HCT116 (cell line): ENCODE measurements at regions of chr2 and their contacts with region 1.

Region 1: DNA sequence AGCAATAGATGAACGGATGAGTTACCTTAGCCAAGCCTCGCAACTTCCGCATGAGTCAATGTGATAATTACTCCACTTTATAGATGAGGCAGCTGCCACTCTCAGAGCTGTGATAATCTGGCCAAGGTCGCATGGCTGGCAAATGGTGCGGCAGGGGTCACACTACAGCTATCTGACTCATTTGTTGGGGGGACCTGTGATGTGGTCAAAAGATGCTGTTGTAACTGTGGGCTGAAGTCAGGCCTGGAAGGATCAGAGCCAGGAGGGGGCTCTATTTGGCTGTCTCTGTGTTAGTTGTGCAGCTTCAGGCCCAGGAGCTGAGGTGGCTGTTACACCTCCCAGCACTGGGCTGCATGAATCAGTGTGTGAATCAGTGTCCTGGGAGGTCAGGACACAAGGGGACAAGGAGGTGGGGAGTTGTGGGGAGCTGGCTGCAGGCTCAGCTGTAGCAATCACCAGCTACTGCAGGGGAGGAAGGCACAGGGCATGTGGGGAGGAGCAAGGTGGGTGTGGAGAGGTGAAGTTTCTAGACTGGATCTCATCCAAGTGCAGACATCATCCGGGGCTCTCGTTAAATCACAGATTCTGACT is 33.1 kb downstream of the NGEF start:
- DNase-seq: peak; percentile 90
- ATAC-seq: peak; percentile 88
- H3K4me3 ChIP-seq: peak overlapping the region in 1 of 2 experiments; percentile 26; a peak in 1 of 4 replicates
- H3K27ac ChIP-seq: peak overlapping the region; percentile 50
- H3K4me1 ChIP-seq: peaks cover 36 to 49% of the 10 kb centered on the region in 2 experiments
- H3K27me3 ChIP-seq: no peaks in the 10 kb centered on the region; the same call in 1 of the 2 replicates
- CTCF ChIP-seq: peak in 2 of 3 experiments; percentile 31 to 40; a peak in 2 of 6 replicates
- POLR2A ChIP-seq: no peak
- RAD21 ChIP-seq: no peak

Region 2: DNA sequence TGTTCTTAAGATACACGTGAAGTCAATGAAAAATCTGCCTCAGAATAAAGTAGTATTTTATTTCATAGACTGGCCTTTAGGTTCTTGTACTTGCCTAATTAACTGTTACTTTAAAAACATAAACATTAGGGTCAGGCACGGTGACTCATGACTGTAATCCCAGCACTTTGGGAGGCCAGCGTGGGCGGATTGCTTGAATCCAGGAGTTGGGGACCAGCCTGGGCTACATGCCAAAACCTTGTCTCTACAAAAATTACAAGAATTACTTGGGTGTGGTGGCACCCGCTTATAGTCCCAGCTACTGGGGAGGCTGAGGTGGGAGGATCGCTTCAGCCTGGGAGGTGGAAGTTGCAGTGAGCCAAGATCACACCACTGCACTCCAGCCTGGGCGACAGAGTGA is 125.9 kb before region 1 on chr2:
- CTCF ChIA-PET with region 1: interaction called, 4 read pairs
- POLR2A ChIA-PET with region 1: no interaction called
- RAD21 ChIA-PET with region 1: interaction called, 3 to 6 read pairs
- intact Hi-C with region 1: loop called (anchors 5 kb)
- DNase-seq: peak; percentile 78
- ATAC-seq: peak; percentile 58
- H3K4me3 ChIP-seq: peak overlapping the region in 1 of 2 experiments; percentile 41; a peak in 2 of 4 replicates
- H3K27ac ChIP-seq: peak overlapping the region; percentile 72; the same call in 1 of the 2 replicates
- H3K4me1 ChIP-seq: peaks cover 54 to 64% of the 10 kb centered on the region in 2 experiments
- H3K27me3 ChIP-seq: no peaks in the 10 kb centered on the region
- CTCF ChIP-seq: no peak
- POLR2A ChIP-seq: no peak
- RAD21 ChIP-seq: peak; percentile 28; the same call in 1 of the 2 replicates

Region 3: DNA sequence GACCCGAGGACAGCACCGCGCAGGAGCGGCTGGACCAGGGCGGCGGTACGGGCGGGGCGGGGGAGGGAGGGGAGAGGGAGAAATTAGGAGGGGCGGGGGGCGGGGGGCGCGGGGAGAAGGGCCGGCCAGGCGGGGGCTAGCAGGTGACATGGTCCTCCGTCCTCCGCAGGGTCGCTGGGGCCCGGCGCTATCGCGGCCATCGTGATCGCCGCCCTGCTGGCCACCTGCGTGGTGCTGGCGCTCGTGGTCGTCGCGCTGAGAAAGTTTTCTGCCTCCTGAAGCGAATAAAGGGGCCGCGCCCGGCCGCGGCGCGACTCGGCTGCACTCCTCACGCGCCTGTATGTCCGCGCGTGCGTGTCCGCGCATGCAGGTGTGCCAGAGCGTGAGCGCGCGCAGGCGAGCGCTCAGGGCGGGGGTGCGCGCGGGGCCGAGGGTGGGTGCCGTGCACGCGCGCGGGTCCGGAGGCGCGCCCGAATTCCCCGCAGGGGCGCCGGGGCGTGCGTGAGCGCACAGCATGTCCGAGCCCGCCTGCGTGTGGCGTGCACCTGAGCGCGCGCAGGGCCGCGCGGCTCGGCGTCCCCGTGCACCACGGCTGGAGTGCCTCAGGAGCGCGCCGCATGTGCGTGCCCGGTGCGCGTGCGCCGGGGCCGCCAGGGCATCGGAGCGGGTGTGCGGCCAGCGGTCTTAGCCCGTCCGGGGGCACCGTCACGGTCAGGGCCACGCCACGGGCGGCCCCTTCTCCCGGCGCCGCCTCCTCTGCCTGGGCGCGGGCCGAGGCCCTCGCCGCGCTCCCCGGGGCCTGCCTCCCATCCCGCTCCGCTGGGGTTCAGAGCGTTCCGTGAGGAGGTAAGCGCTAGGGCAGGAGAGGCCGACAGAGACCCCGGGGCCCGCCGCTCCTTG is 103.6 kb before region 1 on chr2:
- CTCF ChIA-PET with region 1: no interaction called
- POLR2A ChIA-PET with region 1: no interaction called
- RAD21 ChIA-PET with region 1: no interaction called
- intact Hi-C with region 1: no loop called
- DNase-seq: no peak
- ATAC-seq: no peak
- H3K4me3 ChIP-seq: no peak overlapping the region
- H3K27ac ChIP-seq: no peak overlapping the region
- H3K4me1 ChIP-seq: no peaks in the 10 kb centered on the region
- H3K27me3 ChIP-seq: no peaks in the 10 kb centered on the region
- CTCF ChIP-seq: 0 out of 6 replicates have a peak, but pooled peaks of 1 of the 3 experiments have one; percentile 4
- POLR2A ChIP-seq: no peak
- RAD21 ChIP-seq: no peak

Region 4: GRCh38 chr2:232890896-232891601 is 88.9 kb before region 1 on chr2:
- CTCF ChIA-PET with region 1: no interaction called
- POLR2A ChIA-PET with region 1: no interaction called
- RAD21 ChIA-PET with region 1: no interaction called
- intact Hi-C with region 1: loop called (anchors 5 kb)
- DNase-seq: peak; percentile 77
- ATAC-seq: peak; percentile 89
- H3K4me3 ChIP-seq: peak overlapping the region; percentile 64
- H3K27ac ChIP-seq: peak overlapping the region; percentile 43; the same call in 1 of the 2 replicates
- H3K4me1 ChIP-seq: peaks cover 15 to 39% of the 10 kb centered on the region in 2 experiments
- H3K27me3 ChIP-seq: no peaks in the 10 kb centered on the region
- CTCF ChIP-seq: no peak
- POLR2A ChIP-seq: no peak
- RAD21 ChIP-seq: peak; percentile 34; the same call in 1 of the 2 replicates

Region 5: DNA sequence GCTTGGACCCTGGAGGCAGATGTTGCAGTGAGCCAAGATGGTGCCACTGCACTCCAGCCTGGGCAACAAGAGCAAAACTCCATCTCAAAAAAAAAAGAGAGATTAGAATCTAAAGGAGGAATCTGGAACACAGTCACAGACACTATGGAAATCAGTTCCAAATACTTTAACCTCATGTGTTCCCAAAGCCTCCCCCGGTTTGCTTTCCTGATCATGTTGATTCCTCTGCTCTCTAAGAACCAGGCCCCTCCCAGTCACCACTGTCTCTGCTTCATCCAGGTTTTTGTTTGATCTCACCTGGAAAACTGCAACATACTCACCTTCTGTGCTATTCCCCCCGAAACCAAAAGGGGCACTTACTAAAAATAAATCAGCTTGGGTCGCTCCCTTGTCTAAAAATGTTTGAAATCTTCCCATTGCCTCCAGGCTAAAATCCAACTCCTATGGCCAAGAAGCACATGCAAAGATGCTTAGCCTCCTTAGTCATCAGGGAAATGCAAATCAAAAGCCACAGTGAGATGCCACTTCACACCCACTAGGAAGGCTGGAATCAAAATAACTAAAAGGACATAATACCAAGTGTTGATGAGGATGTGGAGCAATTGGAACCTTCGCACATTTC is 46.3 kb after region 1 on chr2:
- CTCF ChIA-PET with region 1: interaction called, 12 read pairs
- POLR2A ChIA-PET with region 1: interaction called, 3 read pairs
- RAD21 ChIA-PET with region 1: interaction called, 4 to 7 read pairs
- intact Hi-C with region 1: loop called (anchors 2 kb)
- DNase-seq: no peak
- ATAC-seq: peak; percentile 28; the same call in 1 of the 2 replicates
- H3K4me3 ChIP-seq: no peak overlapping the region
- H3K27ac ChIP-seq: no peak overlapping the region
- H3K4me1 ChIP-seq: peaks cover 10 to 40% of the 10 kb centered on the region in 2 experiments; a peak in 3 of 4 replicates
- H3K27me3 ChIP-seq: no peaks in the 10 kb centered on the region
- CTCF ChIP-seq: 0 out of 6 replicates have a peak, but pooled peaks of 1 of the 3 experiments have one; percentile 2
- POLR2A ChIP-seq: no peak
- RAD21 ChIP-seq: no peak

Region 6: GRCh38 chr2:233389601-233390125 is 409.7 kb after region 1 on chr2:
- CTCF ChIA-PET with region 1: no interaction called
- POLR2A ChIA-PET with region 1: no interaction called
- RAD21 ChIA-PET with region 1: no interaction called
- intact Hi-C with region 1: no loop called
- DNase-seq: no peak
- ATAC-seq: no peak
- H3K4me3 ChIP-seq: no peak overlapping the region
- H3K27ac ChIP-seq: no peak overlapping the region
- H3K4me1 ChIP-seq: 0 out of 4 replicates have a peak, but pooled peaks cover 0 to 4% of the 10 kb centered on the region in 2 experiments
- H3K27me3 ChIP-seq: no peaks in the 10 kb centered on the region
- CTCF ChIP-seq: no peak
- POLR2A ChIP-seq: no peak
- RAD21 ChIP-seq: no peak